ENCODE measurements at regions of chr3 and their contacts with region 1.

Region 1: GRCh38 chr3:170357176-170357919 is at the start of gene SKIL:
- DNase-seq: peak; percentile 96 to 98 (median 97)
- H3K4me3 ChIP-seq: peak within 1 kb of the TSS; percentile 72 to 92 (median 83)
- H3K4me3 Mint-ChIP-seq: peak within 1 kb of the TSS; percentile 88 to 95
- H3K27ac ChIP-seq: peak within 1 kb of the TSS; percentile 98 to 99
- H3K27ac Mint-ChIP-seq: peak within 1 kb of the TSS; percentile 97 to 99 (median 98)
- H3K4me1 ChIP-seq: peaks cover 42 to 55% of the 10 kb centered on the region in 2 donors
- H3K4me1 Mint-ChIP-seq: peaks cover 51% of the 10 kb centered on the region
- H3K27me3 ChIP-seq: no peaks in the 10 kb centered on the region
- H3K27me3 Mint-ChIP-seq: peaks cover 0 to 15% (median 3%) of the 10 kb centered on the region in 3 donors
- CTCF ChIP-seq: no peak
- polyA plus RNA-seq, gene SKIL: 7.5 to 13.4 (median 9.2) TPM

Region 2: GRCh38 chr3:169772897-169773828 is 584.2 kb before region 1 on chr3 and contains the start of gene MYNN:
- intact Hi-C with region 1: loop called (anchors 5 kb)
- DNase-seq: peak; percentile 88 to 92 (median 91)
- H3K4me3 ChIP-seq: peak within 1 kb of the TSS; percentile 75 to 99 (median 76)
- H3K4me3 Mint-ChIP-seq: peak within 1 kb of the TSS; percentile 96 to 97
- H3K27ac ChIP-seq: peak within 1 kb of the TSS; percentile 92 to 97
- H3K27ac Mint-ChIP-seq: peak within 1 kb of the TSS; percentile 98 to 99 (median 99)
- H3K4me1 ChIP-seq: peaks cover 10 to 24% of the 10 kb centered on the region in 2 donors
- H3K4me1 Mint-ChIP-seq: peaks cover 23% of the 10 kb centered on the region
- H3K27me3 ChIP-seq: no peaks in the 10 kb centered on the region
- H3K27me3 Mint-ChIP-seq: peaks cover 0 to 4% (median 4%) of the 10 kb centered on the region in 3 donors
- CTCF ChIP-seq: peak; percentile 25
- polyA plus RNA-seq, gene MYNN: 6.3 to 9.0 (median 8.7) TPM

Region 3: GRCh38 chr3:169966428-169966950 is 390.9 kb before region 1 on chr3 and contains the start of gene SEC62:
- intact Hi-C with region 1: loop called in 1 of 2 experiments (anchors 2 kb)
- DNase-seq: peak; percentile 93 to 95 (median 94)
- H3K4me3 ChIP-seq: peak within 1 kb of the TSS; percentile 78 to 88 (median 81)
- H3K4me3 Mint-ChIP-seq: peak within 1 kb of the TSS; percentile 93 to 94
- H3K27ac ChIP-seq: peak within 1 kb of the TSS; percentile 95 to 98
- H3K27ac Mint-ChIP-seq: peak within 1 kb of the TSS; percentile 96 to 99 (median 98)
- H3K4me1 ChIP-seq: peaks cover 27 to 36% of the 10 kb centered on the region in 2 donors
- H3K4me1 Mint-ChIP-seq: peaks cover 46% of the 10 kb centered on the region
- H3K27me3 ChIP-seq: no peaks in the 10 kb centered on the region
- H3K27me3 Mint-ChIP-seq: peaks cover 0 to 2% (median 2%) of the 10 kb centered on the region in 3 donors
- CTCF ChIP-seq: peak; percentile 59
- polyA plus RNA-seq, gene SEC62: 15.6 to 117 (median 95.2) TPM

Region 4: GRCh38 chr3:170221924-170222646 is 135.3 kb before region 1 on chr3 and contains the start of gene PRKCI:
- intact Hi-C with region 1: loop called in 1 of 2 experiments (anchors 10 kb)
- DNase-seq: peak; percentile 86 to 91 (median 88)
- H3K4me3 ChIP-seq: peak within 1 kb of the TSS; percentile 60 to 93 (median 89)
- H3K4me3 Mint-ChIP-seq: peak within 1 kb of the TSS; percentile 87 to 95
- H3K27ac ChIP-seq: peak within 1 kb of the TSS; percentile 30 to 98
- H3K27ac Mint-ChIP-seq: peak within 1 kb of the TSS; percentile 90 to 99 (median 98)
- H3K4me1 ChIP-seq: peaks cover 13 to 14% of the 10 kb centered on the region in 2 donors
- H3K4me1 Mint-ChIP-seq: peaks cover 15% of the 10 kb centered on the region
- H3K27me3 ChIP-seq: no peaks in the 10 kb centered on the region
- H3K27me3 Mint-ChIP-seq: peaks cover 0 to 3% (median 2%) of the 10 kb centered on the region in 3 donors
- CTCF ChIP-seq: no peak
- polyA plus RNA-seq, gene PRKCI: 5.1 to 15.4 (median 11.6) TPM

Region 5: DNA sequence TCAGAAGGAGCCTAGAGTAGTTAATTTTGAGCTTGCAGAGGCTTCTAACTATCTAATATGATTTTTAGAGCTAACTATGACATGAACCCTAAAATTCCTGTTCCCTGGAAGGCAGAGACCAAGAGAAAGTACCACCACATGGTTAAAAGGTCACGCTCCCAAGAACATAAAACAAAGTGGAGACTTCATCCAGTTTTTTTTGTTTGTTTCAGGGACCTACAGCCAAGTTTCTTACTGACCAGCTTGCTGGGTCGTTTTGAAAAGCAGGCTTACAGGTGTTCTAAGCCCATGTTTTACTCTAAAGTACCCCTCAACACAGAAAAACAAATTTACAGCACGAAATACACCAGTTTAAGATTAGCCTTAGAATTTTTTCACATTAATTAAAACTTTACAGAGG is 39.4 kb before region 1 on chr3:
- intact Hi-C with region 1: loop called in 1 of 2 experiments (anchors 5 kb)
- DNase-seq: no peak
- H3K4me3 ChIP-seq: no peak overlapping the region
- H3K4me3 Mint-ChIP-seq: no peak overlapping the region
- H3K27ac ChIP-seq: no peak overlapping the region
- H3K27ac Mint-ChIP-seq: no peak overlapping the region
- H3K4me1 ChIP-seq: peaks cover 17 to 22% of the 10 kb centered on the region in 2 donors
- H3K4me1 Mint-ChIP-seq: peaks cover 16% of the 10 kb centered on the region
- H3K27me3 ChIP-seq: no peaks in the 10 kb centered on the region
- H3K27me3 Mint-ChIP-seq: peaks cover 0 to 2% (median 0%) of the 10 kb centered on the region in 3 donors
- CTCF ChIP-seq: no peak

Measured in CD14-positive monocyte (primary cell).